ENCODE measurements at regions of chr15 and their contacts with region 1.

Region 1: GRCh38 chr15:30827625-30828288 is 76.0 kb upstream of the FAN1 start:
- DNase-seq: no peak
- H3K4me3 ChIP-seq: no peak overlapping the region
- H3K27ac ChIP-seq: no peak overlapping the region
- H3K4me1 ChIP-seq: peaks cover 0 to 3% (median 0%) of the 10 kb centered on the region in 4 experiments; a peak in 2 of 7 replicates
- H3K27me3 ChIP-seq: no peaks in the 10 kb centered on the region
- CTCF ChIP-seq: no peak
- EP300 ChIP-seq: no peak
- POLR2A ChIP-seq: no peak
- RAD21 ChIP-seq: no peak

Region 2: GRCh38 chr15:30770759-30771158 is 57.0 kb before region 1 on chr15:
- CTCF ChIA-PET with region 1: no interaction called
- POLR2A ChIA-PET with region 1: no interaction called
- DNase-seq: no peak
- H3K4me3 ChIP-seq: no peak overlapping the region
- H3K27ac ChIP-seq: no peak overlapping the region
- H3K4me1 ChIP-seq: no peaks in the 10 kb centered on the region
- H3K27me3 ChIP-seq: no peaks in the 10 kb centered on the region
- CTCF ChIP-seq: no peak
- EP300 ChIP-seq: no peak
- POLR2A ChIP-seq: no peak
- RAD21 ChIP-seq: no peak

Region 3: DNA sequence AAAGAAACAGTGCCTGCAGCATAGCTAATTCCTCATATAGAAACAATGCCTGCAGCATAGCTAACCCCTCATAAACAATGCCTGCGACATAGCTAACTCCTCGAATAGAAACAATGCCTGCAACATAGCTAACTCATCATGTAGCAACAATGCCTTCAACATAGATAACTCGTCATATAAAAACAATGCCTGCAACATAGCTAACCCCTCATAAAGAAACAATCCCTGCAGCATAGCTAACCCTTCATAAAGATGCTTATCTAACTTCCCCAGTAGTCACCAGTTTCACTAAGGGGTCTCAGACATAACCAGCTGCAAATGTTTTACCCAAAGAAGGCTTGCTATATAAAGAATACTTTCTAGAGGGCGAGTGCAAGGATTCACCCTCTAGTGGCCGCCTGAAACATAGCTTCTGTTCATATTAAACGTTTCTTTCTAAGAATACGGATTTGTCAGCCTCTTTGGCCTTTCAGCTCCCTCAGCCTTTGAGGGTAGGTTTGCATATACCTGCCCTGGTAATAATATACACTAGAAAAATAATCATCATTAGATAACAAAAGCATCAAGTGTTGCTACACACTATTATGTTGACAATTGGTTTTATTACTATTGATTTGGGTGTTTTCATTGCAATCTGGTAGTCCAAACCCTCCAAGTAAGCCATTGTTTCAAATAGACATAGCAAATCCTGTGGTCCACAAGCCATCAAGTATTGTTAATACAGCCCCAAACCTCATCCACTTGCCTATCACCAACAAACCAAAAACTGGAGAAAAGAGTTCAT is 31.5 kb after region 1 on chr15:
- CTCF ChIA-PET with region 1: interaction called, 18 read pairs
- POLR2A ChIA-PET with region 1: no interaction called
- DNase-seq: no peak
- H3K4me3 ChIP-seq: no peak overlapping the region
- H3K27ac ChIP-seq: no peak overlapping the region
- H3K4me1 ChIP-seq: peaks cover 0 to 3% (median 1%) of the 10 kb centered on the region in 4 experiments; a peak in 2 of 7 replicates
- H3K27me3 ChIP-seq: no peaks in the 10 kb centered on the region
- CTCF ChIP-seq: peak in 2 of 3 experiments; percentile 49 to 71; a peak in 2 of 4 replicates
- EP300 ChIP-seq: no peak
- POLR2A ChIP-seq: no peak
- RAD21 ChIP-seq: peak; percentile 38 to 51; a peak in 3 of 4 replicates